ENCODE measurements at regions of chr12 and their contacts with region 1.

Region 1: GRCh38 chr12:54153586-54153985 is 35.2 kb downstream of the SMUG1 start:
- DNase-seq: no peak
- ATAC-seq: no peak
- H3K4me3 ChIP-seq: no peak overlapping the region
- H3K27ac ChIP-seq: no peak overlapping the region
- H3K4me1 ChIP-seq: no peaks in the 10 kb centered on the region
- H3K27me3 ChIP-seq: peaks cover 51% of the 10 kb centered on the region
- CTCF ChIP-seq: no peak
- POLR2A ChIP-seq: no peak
- RAD21 ChIP-seq: no peak

Region 2: DNA sequence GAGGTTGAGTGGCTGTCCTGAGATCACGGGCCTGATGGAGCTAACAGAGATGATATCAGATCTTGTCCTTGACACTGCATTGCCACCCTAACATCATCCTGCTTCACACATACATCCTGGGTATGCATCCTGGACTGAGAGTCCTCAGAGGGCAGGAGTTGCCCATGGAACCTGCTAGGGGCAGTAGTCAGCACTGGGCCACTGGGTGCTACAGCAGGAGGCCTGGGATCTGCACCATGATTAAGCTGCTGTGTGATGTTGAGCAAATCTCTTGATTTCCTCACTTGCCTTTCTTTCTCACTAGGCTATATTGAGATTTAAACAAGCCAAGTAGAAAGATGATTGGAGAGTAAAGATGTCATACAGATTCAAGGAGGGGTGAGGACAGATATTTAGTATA is 1169.5 kb before region 1 on chr12:
- CTCF ChIA-PET with region 1: no interaction called
- POLR2A ChIA-PET with region 1: no interaction called
- dilution Hi-C with region 1: no loop called
- in situ Hi-C with region 1: no loop called
- intact Hi-C with region 1: no loop called
- DNase-seq: no peak
- ATAC-seq: no peak
- H3K4me3 ChIP-seq: no peak overlapping the region
- H3K27ac ChIP-seq: no peak overlapping the region
- H3K4me1 ChIP-seq: no peaks in the 10 kb centered on the region
- H3K27me3 ChIP-seq: peaks cover 9% of the 10 kb centered on the region
- CTCF ChIP-seq: no peak
- POLR2A ChIP-seq: no peak
- RAD21 ChIP-seq: no peak

Region 3: DNA sequence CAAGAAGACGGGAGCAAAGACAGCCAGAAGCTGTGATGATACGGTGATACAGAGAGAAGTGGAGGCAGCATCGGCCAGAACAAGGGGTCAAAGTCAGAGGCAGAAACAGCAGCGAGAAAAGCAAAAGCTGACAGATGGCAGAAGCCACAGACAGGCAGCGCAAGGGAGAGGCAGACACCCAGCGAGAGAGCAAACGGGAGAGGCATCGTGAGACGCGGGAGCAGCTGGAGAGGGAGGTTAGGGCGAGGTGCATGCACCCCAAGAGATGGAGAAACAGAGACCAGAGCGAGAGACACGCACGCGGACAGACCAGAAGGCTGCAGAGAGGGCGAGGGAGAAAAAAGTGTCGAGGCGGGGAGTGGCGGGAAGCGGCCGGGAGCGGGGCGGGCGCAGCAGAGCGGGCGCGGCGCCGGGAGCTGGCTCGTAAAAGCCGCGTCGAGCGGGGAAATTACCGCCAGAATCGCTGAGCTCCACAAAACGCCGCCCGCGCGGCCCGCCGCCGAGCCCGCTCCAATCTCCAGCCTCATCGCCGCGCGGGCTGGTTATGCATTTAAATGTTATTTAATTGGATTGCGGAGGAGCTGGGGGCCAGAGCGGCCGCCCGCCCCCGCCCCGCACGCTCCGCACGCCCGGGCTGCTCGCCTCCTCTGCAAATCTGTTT is 19.6 kb after region 1 on chr12:
- CTCF ChIA-PET with region 1: interaction called, 10 read pairs
- POLR2A ChIA-PET with region 1: no interaction called
- dilution Hi-C with region 1: no loop called
- in situ Hi-C with region 1: no loop called
- intact Hi-C with region 1: no loop called
- DNase-seq: no peak
- ATAC-seq: peak; percentile 81
- H3K4me3 ChIP-seq: peak overlapping the region; percentile 31
- H3K27ac ChIP-seq: no peak overlapping the region
- H3K4me1 ChIP-seq: no peaks in the 10 kb centered on the region
- H3K27me3 ChIP-seq: peaks cover 56% of the 10 kb centered on the region
- CTCF ChIP-seq: no peak
- POLR2A ChIP-seq: no peak
- RAD21 ChIP-seq: no peak

Measured in IMR-90 (cell line).